PC-9 (cell line): ENCODE measurements at regions of chr22 and their contacts with region 1.

Region 1: DNA sequence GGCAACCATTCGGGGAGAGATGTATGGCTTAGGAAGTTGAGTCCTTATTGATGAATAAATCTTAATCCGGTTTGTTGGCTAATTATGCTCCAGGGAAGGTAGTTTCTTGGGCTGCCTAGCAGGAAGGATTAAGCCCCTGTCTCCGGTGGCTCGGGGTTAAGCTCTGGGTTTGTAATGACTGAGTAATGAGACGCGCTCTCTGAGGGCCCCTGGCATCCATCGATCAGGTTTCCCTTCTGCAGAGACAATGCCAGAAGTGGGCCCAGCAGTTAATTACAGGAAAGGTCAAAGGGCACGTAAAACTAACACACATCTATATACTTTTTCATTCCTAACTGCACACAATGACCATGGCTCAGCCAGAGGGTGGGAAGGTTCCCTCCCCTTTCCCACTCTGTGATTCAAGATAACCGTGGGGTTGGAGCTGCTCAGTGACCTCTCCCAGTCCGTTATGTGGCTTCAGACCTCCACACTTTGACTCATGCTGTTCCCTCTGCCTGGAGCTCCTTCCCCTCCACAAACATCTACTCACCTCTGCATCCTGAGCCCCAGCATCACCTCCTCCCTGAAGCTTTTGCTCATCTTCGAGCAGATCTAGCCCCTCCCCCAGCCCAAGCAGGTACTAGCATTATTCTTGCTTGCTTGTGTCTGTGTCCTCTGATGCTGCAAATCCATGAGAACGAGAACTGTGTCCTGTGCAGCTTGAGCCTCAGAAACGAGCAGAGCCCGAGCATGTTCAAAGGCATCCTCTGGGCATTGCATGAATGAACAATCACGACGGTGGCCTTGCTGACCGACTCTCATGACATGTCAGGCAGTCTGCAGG is 16.6 kb downstream of the SCUBE1 start:
- DNase-seq: no peak
- H3K4me3 ChIP-seq: no peak overlapping the region
- H3K27ac ChIP-seq: no peak overlapping the region
- H3K4me1 ChIP-seq: no peaks in the 10 kb centered on the region
- H3K27me3 ChIP-seq: peaks cover 94% of the 10 kb centered on the region
- CTCF ChIP-seq: no peak

Region 2: GRCh38 chr22:44901301-44901700 is 1574.8 kb after region 1 on chr22:
- CTCF ChIA-PET with region 1: interaction called, 11 read pairs
- POLR2A ChIA-PET with region 1: no interaction called
- intact Hi-C with region 1: no loop called
- DNase-seq: no peak
- H3K4me3 ChIP-seq: no peak overlapping the region
- H3K27ac ChIP-seq: no peak overlapping the region
- H3K4me1 ChIP-seq: no peaks in the 10 kb centered on the region
- H3K27me3 ChIP-seq: peaks cover 79% of the 10 kb centered on the region
- CTCF ChIP-seq: no peak